HEK293 (cell line): ENCODE measurements at regions of chr2 and their contacts with region 1.

Region 1: GRCh38 chr2:74147727-74148456 is at the start of gene BOLA3:
- H3K4me3 ChIP-seq: peak within 1 kb of the TSS; percentile 63
- H3K27ac ChIP-seq: peak within 1 kb of the TSS; percentile 67
- H3K4me1 ChIP-seq: no peaks in the 10 kb centered on the region
- CTCF ChIP-seq: peak; percentile 59

Region 2: DNA sequence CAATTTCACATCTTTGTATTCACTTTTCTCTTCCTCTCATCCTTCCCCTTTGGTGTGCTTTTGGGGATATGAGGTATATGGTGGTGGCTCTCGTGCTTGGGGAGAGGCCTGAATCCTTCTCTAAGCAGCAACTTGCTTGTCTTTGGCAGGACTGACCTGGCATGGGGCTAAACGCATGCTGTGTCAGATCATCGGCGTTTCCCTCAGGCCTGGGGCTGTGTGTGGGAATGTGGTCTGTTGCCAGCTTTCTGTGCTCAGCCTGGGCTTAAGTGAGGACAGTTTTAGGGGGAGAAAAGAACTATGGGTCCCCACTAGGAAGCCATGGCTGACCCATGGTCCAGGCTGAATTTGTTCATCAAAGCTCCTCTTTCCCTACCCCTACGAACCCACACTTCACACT is 102.4 kb before region 1 on chr2:
- CTCF ChIA-PET with region 1: no interaction called
- POLR2A ChIA-PET with region 1: no interaction called
- H3K4me3 ChIP-seq: no peak overlapping the region
- H3K27ac ChIP-seq: no peak overlapping the region
- H3K4me1 ChIP-seq: no peaks in the 10 kb centered on the region
- CTCF ChIP-seq: no peak

Region 3: DNA sequence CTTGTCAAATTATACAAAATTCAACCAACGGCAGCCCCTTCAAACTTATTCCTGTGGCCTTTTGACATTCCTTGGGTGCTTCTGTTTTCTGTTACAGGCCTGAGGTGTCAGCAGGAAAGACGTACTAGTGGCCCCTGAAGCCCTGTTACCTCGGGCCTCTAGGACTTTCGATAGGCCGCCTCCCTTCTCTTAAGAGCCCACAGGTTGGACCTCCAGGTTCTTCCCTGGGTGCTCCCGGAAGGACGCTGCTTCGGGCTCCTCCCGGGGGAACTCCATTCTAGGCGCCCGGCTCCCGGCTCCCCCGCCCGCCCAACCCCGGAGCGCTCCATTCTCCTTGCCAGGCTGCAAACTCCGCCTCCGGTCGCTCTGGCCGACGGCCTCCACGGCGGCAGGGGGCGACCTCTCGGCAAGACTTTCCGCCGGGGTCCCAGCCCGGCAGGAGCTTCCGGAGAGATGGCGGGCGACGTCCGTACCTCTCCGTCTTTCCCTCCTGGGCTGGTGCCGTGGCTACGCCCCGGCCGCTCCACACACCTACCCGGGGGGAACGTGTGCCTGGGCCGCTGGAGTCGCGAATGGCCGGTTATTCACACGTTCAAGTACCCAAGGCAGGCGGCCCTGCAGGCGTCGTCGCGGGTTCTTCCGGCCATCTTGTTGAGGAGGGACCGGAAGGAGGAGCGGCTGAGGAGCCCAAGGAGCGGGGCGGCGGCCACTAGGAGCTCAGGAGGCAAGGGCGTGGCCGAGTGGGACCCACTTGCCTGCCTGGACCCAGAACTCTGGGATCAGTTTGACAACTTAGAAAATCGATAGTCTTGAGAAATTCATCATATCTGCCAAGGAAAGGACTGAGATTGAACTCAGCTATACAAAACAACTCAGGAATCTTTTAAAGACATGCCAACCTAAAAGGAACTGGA is 27.7 kb before region 1 on chr2:
- CTCF ChIA-PET with region 1: interaction called, 7 read pairs
- POLR2A ChIA-PET with region 1: interaction called, 11 read pairs
- H3K4me3 ChIP-seq: peak overlapping the region; percentile 78
- H3K27ac ChIP-seq: peak overlapping the region; percentile 96
- H3K4me1 ChIP-seq: no peaks in the 10 kb centered on the region
- CTCF ChIP-seq: peak; percentile 98